Psoas muscle (tissue), 8 donors: ENCODE measurements at regions of chr1 and their contacts with region 1.

Region 1: GRCh38 chr1:15736038-15736889 is at the start of gene SLC25A34:
- DNase-seq: peak; percentile 86 to 95
- ATAC-seq: peak; percentile 86 to 90 (median 88)
- H3K4me3 ChIP-seq: peak within 1 kb of the TSS; percentile 70
- H3K27ac ChIP-seq: peak within 1 kb of the TSS; percentile 95
- H3K4me1 ChIP-seq: peaks cover 23% of the 10 kb centered on the region
- H3K27me3 ChIP-seq: no peaks in the 10 kb centered on the region
- CTCF ChIP-seq: no peak
- total RNA-seq, gene SLC25A34: 6.1 to 48.2 (median 37.2) TPM

Region 2: DNA sequence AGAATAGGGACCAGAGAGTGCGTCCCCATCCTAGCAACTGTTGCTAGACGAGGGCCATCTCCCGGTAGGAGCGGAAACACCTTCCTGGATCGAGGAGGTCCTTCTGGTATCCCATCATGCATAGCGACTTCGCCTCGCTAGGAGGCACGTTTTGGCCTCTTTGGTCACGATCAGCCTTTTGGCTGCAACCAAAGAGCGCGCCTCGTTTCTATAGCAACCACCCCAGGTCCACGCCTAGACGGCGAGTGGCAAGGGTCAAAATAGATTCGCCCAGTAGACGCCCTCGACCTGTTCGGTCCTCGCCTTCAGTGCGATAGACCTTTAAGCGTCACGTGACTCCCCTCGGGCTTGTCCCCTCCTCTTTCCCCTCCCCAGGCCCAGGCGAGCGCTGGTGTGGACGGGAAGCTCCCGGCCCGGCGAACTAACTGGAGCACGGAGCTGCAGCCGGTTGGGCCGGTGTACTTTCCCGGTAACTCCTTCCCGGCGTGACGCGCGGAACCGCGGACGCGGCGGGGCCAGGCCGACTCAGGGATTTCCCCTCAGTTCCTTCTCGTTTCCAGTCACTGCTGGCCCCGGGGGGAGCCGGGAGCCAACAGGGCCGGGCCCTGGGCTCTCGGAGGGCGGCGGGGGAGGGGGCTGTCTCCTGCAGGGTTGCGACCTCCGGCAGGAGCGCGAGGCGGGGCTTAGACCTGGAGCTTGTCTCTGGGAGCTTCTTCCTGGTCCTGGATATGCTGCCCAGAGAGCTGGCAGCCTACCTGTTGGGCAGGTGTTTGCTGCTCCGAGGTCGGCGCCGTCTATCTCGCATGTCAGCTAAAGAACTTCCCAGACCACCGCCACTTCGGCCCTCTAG is 209.5 kb before region 1 on chr1 and contains the start of gene DNAJC16:
- intact Hi-C with region 1: loop called in 1 of 2 experiments (anchors 5 kb)
- DNase-seq: peak; percentile 98 to 99
- ATAC-seq: peak; percentile 72 to 73 (median 72)
- H3K4me3 ChIP-seq: peak within 1 kb of the TSS; percentile 87
- H3K27ac ChIP-seq: peak within 1 kb of the TSS; percentile 90
- H3K4me1 ChIP-seq: peaks cover 26% of the 10 kb centered on the region
- H3K27me3 ChIP-seq: no peaks in the 10 kb centered on the region
- CTCF ChIP-seq: peak; percentile 31
- total RNA-seq, gene DNAJC16: 17.2 to 29.9 (median 22.7) TPM

Region 3: DNA sequence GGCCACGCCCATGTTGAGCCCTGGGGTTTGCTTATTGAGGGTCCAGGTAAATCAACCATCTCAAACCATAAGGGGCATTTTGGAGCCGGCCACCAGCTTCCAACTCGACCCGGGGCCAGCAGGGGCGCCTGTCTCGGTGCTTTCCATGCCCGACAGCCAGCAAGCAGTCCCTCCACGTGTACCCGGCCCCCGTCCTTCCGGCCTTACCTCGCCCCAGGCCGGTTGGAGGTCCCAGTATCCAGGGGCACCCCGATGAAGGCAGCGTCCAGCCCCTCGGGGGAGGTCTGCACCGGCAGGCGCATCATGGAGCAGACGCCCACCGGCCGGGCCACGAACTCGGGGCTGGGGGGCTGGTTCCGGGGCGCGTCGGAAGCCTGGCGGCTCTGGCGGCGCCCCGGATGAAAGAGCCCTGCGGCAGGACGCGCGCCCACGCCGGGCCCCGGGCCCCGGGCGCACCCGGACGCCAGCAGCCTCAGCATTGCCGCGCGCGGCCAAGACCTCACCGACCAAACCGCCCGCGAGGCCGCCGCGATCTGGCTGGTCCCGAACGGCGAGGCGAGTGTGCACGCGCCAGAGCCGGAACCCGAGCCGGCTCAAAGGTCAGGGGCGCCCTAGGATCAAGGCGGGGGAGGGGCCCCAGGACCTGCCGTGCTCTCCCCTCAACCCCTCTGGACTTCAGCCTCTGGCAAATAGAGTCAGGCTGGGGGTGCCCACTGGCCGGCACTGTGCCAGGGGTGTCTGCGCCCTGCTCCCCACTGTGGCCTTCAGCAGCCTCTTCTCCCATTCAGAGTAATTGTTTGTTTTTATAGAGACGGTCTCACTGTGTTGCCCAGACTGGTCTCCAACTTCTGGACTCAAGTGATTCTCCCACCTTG is 151.5 kb before region 1 on chr1 and contains the start of gene AGMAT:
- intact Hi-C with region 1: loop called in 1 of 2 experiments (anchors 5 kb)
- DNase-seq: peak; percentile 50 to 63
- ATAC-seq: peak; percentile 43 to 53 (median 46)
- H3K4me3 ChIP-seq: peak within 1 kb of the TSS; percentile 62
- H3K27ac ChIP-seq: peak within 1 kb of the TSS; percentile 95
- H3K4me1 ChIP-seq: peaks cover 42% of the 10 kb centered on the region
- H3K27me3 ChIP-seq: no peaks in the 10 kb centered on the region
- CTCF ChIP-seq: peak; percentile 29
- total RNA-seq, gene AGMAT: 2.6 to 12.6 (median 3.4) TPM

Region 4: DNA sequence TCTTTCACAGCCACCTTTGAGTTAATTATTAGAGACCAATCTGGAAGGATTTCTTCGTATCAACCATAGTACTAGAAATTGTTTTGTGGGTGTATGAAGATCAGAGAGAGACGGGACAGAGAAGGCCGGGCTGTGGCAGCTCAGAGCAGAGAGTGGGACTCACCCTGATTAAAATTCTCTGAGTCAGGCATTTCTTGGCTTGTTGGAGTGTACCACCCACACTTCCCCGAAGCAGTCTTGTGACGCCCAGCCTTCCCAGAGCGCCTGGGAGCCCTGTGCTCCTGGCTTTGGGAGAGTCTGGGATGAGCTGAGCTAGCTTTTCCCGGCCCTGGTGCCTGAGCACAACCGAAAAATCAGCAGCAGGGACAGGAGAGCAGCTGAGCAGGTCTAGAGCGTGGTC is 32.7 kb before region 1 on chr1:
- intact Hi-C with region 1: no loop called
- DNase-seq: peak; percentile 82 to 83
- ATAC-seq: peak; percentile 50 to 80 (median 69)
- H3K4me3 ChIP-seq: peak overlapping the region; percentile 5
- H3K27ac ChIP-seq: peak overlapping the region; percentile 94
- H3K4me1 ChIP-seq: peaks cover 72% of the 10 kb centered on the region
- H3K27me3 ChIP-seq: no peaks in the 10 kb centered on the region
- CTCF ChIP-seq: no peak